ENCODE measurements at regions of chr2 and their contacts with region 1.

Region 1: DNA sequence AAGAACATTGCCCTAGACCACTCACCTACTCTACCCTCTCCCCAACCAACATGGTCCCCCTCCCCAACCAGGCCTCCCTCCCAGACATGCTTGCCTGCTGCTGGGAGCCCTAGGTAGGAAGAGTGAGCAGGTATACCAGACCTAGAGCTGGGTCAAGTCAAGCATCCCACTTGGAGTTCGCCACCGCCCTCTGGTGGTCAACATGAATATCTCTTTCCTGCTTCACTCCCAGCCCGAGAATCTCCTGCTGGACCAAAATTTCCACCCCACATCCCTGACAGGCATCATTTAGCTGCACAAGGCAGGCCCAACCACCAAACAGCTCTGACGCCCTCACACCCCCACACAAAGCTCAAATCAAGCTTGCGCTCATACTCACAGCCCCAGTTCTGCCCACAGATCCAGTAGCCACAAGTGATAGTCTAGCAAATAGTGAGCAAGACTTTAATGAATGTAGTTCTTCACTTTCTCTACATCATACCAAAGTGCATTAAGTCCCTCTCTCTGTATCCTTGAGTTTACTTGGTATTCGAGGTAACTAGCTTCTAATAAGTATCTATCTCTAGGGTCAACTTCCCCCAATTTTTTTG is 116.0 kb downstream of the TNS1 start:
- DNase-seq: peak; percentile 79
- ATAC-seq: peak; percentile 87
- H3K4me3 Mint-ChIP-seq: no peak overlapping the region
- H3K27ac Mint-ChIP-seq: no peak overlapping the region
- H3K4me1 Mint-ChIP-seq: no peaks in the 10 kb centered on the region
- H3K27me3 Mint-ChIP-seq: peaks cover 2% of the 10 kb centered on the region
- CTCF ChIP-seq: peak; percentile 71

Region 2: DNA sequence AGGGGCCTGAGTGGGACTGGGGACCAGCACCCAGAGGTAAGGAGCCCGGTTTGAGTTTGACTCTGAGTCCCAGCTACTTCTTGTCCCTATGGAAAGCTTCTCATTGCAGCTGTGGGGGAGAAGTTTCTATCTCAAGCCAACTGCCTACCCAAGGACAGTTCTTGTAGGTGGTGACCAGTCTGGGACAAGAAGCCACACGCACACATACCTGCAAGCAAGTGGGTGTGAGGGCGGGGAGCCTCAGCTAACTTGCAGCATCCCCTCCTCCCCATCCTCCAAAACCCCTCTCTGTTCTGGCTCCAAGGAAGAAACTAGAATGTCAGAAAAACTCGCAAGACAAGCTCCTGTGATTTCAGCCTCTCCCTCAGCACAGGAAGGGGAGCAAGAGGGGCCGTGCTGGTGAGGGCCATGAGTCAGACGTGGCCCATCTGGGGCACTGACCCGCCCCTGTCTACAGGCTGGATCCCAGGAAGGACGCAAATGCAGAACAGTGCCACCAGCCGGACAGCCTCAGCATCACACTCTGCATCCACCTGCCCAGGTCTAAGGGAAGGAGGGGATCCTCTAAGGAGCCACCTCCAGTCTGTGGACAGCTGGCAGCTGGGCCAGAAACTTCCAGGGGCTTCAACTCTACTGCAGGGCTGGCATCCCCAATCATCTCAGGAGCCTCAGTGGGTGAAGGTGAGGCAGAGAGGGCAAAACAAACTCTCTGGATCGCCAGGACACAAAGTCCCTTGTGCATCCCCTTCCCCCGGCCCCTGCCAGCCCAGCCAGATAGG is 12.6 kb after region 1 on chr2:
- CTCF ChIA-PET with region 1: interaction called, 10 read pairs
- POLR2A ChIA-PET with region 1: no interaction called
- intact Hi-C with region 1: no loop called
- DNase-seq: peak; percentile 26
- ATAC-seq: peak; percentile 43
- H3K4me3 Mint-ChIP-seq: no peak overlapping the region
- H3K27ac Mint-ChIP-seq: no peak overlapping the region
- H3K4me1 Mint-ChIP-seq: peaks cover 6% of the 10 kb centered on the region
- H3K27me3 Mint-ChIP-seq: peaks cover 1% of the 10 kb centered on the region
- CTCF ChIP-seq: no peak

Region 3: DNA sequence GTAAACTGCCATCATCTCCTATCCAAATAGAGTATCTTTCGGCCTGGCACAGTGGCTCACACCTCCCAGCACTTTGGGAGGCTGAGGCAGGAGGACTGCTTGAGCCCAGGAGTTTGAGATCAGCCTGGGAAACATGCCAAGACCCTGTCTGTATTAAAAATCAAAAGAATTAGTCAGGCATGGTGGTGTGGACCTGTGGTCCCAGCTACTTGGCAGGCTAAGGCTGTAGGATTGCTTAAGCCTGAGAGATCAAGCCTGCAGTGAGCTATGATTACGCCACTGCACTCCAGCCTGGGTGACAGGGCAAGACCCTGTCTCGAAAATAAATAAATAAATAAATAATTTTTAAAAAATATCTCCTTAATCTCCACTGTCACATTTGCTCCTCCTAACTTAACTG is 315.5 kb after region 1 on chr2:
- CTCF ChIA-PET with region 1: no interaction called
- POLR2A ChIA-PET with region 1: no interaction called
- intact Hi-C with region 1: no loop called
- DNase-seq: no peak
- ATAC-seq: no peak
- H3K4me3 Mint-ChIP-seq: no peak overlapping the region
- H3K27ac Mint-ChIP-seq: no peak overlapping the region
- H3K4me1 Mint-ChIP-seq: no peaks in the 10 kb centered on the region
- H3K27me3 Mint-ChIP-seq: no peaks in the 10 kb centered on the region
- CTCF ChIP-seq: no peak